ENCODE measurements at regions of chr19 and their contacts with region 1.

Region 1: GRCh38 chr19:9934132-9934950 is 2.0 kb downstream of the OLFM2 start:
- DNase-seq: peak; percentile 47 to 67 (median 49)
- H3K4me3 ChIP-seq: no peak overlapping the region
- H3K4me3 Mint-ChIP-seq: peak overlapping the region in 1 of 2 donors; percentile 70
- H3K27ac ChIP-seq: no peak overlapping the region
- H3K27ac Mint-ChIP-seq: peak overlapping the region in 1 of 7 donors; percentile 66
- H3K4me1 ChIP-seq: no peaks in the 10 kb centered on the region
- H3K4me1 Mint-ChIP-seq: peaks cover 15% of the 10 kb centered on the region
- H3K27me3 ChIP-seq: peaks cover 22 to 43% of the 10 kb centered on the region in 2 donors
- H3K27me3 Mint-ChIP-seq: peaks cover 48 to 64% (median 49%) of the 10 kb centered on the region in 3 donors
- CTCF ChIP-seq: peak; percentile 85

Region 2: DNA sequence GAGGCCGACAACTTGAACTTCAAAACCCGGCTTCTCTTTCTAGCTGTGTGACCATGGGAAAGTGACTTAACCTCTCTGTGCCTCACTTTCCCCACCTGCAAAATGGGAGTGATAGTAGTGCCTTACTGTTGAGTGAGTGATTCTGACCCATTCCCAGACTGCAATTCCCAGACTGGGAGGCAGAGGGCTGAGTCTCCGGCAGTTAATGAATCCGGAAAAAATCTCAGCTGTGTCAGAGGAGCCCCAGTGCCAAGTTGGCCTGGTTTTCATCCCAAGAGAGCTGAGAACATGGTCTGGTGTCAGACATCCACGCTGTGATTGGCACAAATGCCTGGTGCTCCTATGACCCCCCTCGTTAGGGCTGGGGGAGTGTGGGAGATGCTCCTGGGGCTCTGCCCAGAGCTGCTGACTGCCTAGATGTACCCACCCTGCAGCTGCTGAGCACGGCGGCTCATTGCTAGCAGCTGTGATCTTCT is 49.2 kb before region 1 on chr19:
- intact Hi-C with region 1: no loop called
- DNase-seq: no peak
- H3K4me3 ChIP-seq: no peak overlapping the region
- H3K4me3 Mint-ChIP-seq: no peak overlapping the region
- H3K27ac ChIP-seq: no peak overlapping the region
- H3K27ac Mint-ChIP-seq: peak overlapping the region in 1 of 7 donors; percentile 41
- H3K4me1 ChIP-seq: no peaks in the 10 kb centered on the region
- H3K4me1 Mint-ChIP-seq: no peaks in the 10 kb centered on the region
- H3K27me3 ChIP-seq: no peaks in the 10 kb centered on the region
- H3K27me3 Mint-ChIP-seq: peaks cover 2 to 14% (median 13%) of the 10 kb centered on the region in 3 donors
- CTCF ChIP-seq: no peak

Region 3: DNA sequence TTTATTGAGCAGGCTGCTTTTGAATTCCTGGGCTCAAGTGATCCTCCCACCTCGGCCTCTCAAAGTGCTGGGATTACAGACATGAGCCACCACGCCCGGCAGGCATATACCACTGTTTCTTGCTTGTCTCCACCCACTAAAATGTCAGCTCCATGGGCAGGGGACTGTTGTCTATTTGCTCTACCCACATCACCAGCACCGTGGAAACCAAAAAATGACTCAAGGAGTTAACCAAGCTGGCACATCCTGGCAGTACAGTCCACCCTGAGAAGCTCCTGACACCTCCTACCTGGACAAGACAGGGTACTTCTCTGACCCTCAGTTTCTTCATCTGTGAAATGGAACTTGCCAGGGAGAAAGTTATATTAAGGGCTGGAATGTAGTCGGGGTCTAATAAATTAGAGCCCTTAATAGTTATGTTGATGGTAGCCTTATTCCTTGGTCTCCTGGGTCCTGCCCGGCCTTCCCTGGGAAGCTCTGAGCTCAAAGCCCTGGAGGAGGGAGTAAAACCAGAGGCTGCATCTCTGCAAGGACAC is 92.9 kb after region 1 on chr19:
- intact Hi-C with region 1: loop called (anchors 2 to 5 kb)
- DNase-seq: no peak
- H3K4me3 ChIP-seq: peak overlapping the region in 1 of 3 experiments; percentile 39
- H3K4me3 Mint-ChIP-seq: peak overlapping the region in 1 of 2 donors; percentile 27
- H3K27ac ChIP-seq: no peak overlapping the region
- H3K27ac Mint-ChIP-seq: no peak overlapping the region
- H3K4me1 ChIP-seq: peaks cover 3 to 5% of the 10 kb centered on the region in 2 donors
- H3K4me1 Mint-ChIP-seq: peaks cover 3% of the 10 kb centered on the region
- H3K27me3 ChIP-seq: peaks cover 0 to 9% of the 10 kb centered on the region in 2 donors
- H3K27me3 Mint-ChIP-seq: peaks cover 11 to 18% (median 14%) of the 10 kb centered on the region in 3 donors
- CTCF ChIP-seq: no peak

Region 4: GRCh38 chr19:10238172-10238783 is 303.9 kb after region 1 on chr19:
- intact Hi-C with region 1: loop called in 1 of 2 experiments (anchors 5 kb)
- DNase-seq: peak in 1 of 3 donors; percentile 40
- H3K4me3 ChIP-seq: no peak overlapping the region
- H3K4me3 Mint-ChIP-seq: no peak overlapping the region
- H3K27ac ChIP-seq: no peak overlapping the region
- H3K27ac Mint-ChIP-seq: no peak overlapping the region
- H3K4me1 ChIP-seq: peaks cover 11 to 19% of the 10 kb centered on the region in 2 donors
- H3K4me1 Mint-ChIP-seq: peaks cover 14% of the 10 kb centered on the region
- H3K27me3 ChIP-seq: no peaks in the 10 kb centered on the region
- H3K27me3 Mint-ChIP-seq: peaks cover 1 to 6% (median 3%) of the 10 kb centered on the region in 3 donors
- CTCF ChIP-seq: no peak

Region 5: GRCh38 chr19:10251792-10252694 is 317.7 kb after region 1 on chr19 and contains the start of gene MRPL4:
- intact Hi-C with region 1: loop called (anchors 2 to 5 kb)
- DNase-seq: peak; percentile 97 to 99 (median 98)
- H3K4me3 ChIP-seq: peak within 1 kb of the TSS; percentile 56 to 98 (median 86)
- H3K4me3 Mint-ChIP-seq: peak within 1 kb of the TSS; percentile 96 to 97
- H3K27ac ChIP-seq: peak within 1 kb of the TSS; percentile 47 to 88
- H3K27ac Mint-ChIP-seq: peak within 1 kb of the TSS; percentile 88 to 99 (median 94)
- H3K4me1 ChIP-seq: peaks cover 16 to 28% of the 10 kb centered on the region in 2 donors
- H3K4me1 Mint-ChIP-seq: peaks cover 12% of the 10 kb centered on the region
- H3K27me3 ChIP-seq: no peaks in the 10 kb centered on the region
- H3K27me3 Mint-ChIP-seq: peaks cover 0 to 3% (median 1%) of the 10 kb centered on the region in 3 donors
- CTCF ChIP-seq: no peak
- polyA plus RNA-seq, gene MRPL4: 20.4 to 40.2 (median 22.7) TPM

Region 6: GRCh38 chr19:10388957-10389356 is 454.6 kb after region 1 on chr19:
- intact Hi-C with region 1: loop called in 1 of 2 experiments (anchors 5 kb)
- DNase-seq: peak; percentile 73 to 85 (median 83)
- H3K4me3 ChIP-seq: no peak overlapping the region
- H3K4me3 Mint-ChIP-seq: no peak overlapping the region
- H3K27ac ChIP-seq: no peak overlapping the region
- H3K27ac Mint-ChIP-seq: peak overlapping the region in 4 of 7 donors; percentile 18 to 75 (median 60)
- H3K4me1 ChIP-seq: peaks cover 0 to 6% of the 10 kb centered on the region in 2 donors
- H3K4me1 Mint-ChIP-seq: peaks cover 5% of the 10 kb centered on the region
- H3K27me3 ChIP-seq: no peaks in the 10 kb centered on the region
- H3K27me3 Mint-ChIP-seq: peaks cover 0 to 9% (median 0%) of the 10 kb centered on the region in 3 donors
- CTCF ChIP-seq: peak; percentile 97

Region 7: DNA sequence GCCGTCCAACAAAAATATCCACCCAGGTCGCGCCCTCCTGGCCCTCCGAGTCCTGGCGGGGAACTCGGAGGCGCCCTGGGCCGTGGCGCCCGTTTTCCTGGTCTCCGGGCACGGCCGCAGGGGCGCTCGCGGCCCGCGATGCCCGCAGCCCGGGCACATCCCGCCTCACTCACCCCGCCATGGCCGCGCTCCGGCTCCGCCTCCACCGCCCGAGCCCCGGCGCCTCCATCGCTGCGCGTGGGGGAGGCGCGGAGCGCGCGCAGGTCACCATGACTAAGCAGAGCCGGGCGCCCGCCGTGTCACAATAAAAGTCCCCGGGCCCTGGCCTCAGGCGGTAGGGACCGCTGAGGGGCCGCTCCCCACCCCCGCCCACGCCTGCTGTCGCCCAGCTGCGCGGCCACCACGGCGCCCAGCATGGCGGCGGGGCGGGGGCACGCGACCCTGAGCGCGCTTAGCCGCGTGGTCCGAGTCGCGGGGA is 568.2 kb after region 1 on chr19:
- intact Hi-C with region 1: loop called in 1 of 2 experiments (anchors 10 kb)
- DNase-seq: peak; percentile 85 to 88 (median 88)
- H3K4me3 ChIP-seq: peak overlapping the region; percentile 89 to 99 (median 91)
- H3K4me3 Mint-ChIP-seq: peak overlapping the region; percentile 88 to 93
- H3K27ac ChIP-seq: peak overlapping the region; percentile 88 to 89
- H3K27ac Mint-ChIP-seq: peak overlapping the region; percentile 89 to 96 (median 93)
- H3K4me1 ChIP-seq: peaks cover 14 to 28% of the 10 kb centered on the region in 2 donors
- H3K4me1 Mint-ChIP-seq: peaks cover 33% of the 10 kb centered on the region
- H3K27me3 ChIP-seq: no peaks in the 10 kb centered on the region
- H3K27me3 Mint-ChIP-seq: peaks cover 0 to 5% (median 2%) of the 10 kb centered on the region in 3 donors
- CTCF ChIP-seq: no peak